Endothelial cell of umbilical vein (primary cell): ENCODE measurements at regions of chr12 and their contacts with region 1.

Region 1: GRCh38 chr12:1474041-1474573 is 120.3 kb downstream of the FBXL14 start:
- DNase-seq: peak; percentile 87
- H3K4me3 ChIP-seq: peak overlapping the region in 1 of 3 experiments; percentile 33
- H3K27ac ChIP-seq: peak overlapping the region; percentile 53
- H3K4me1 ChIP-seq: peaks cover 27% of the 10 kb centered on the region
- H3K27me3 ChIP-seq: peaks cover 9 to 32% of the 10 kb centered on the region in 2 experiments
- CTCF ChIP-seq: no peak
- POLR2A ChIP-seq: peak; percentile 52

Region 2: GRCh38 chr12:1138691-1139090 is 335.4 kb before region 1 on chr12:
- CTCF ChIA-PET with region 1: no interaction called
- POLR2A ChIA-PET with region 1: no interaction called
- dilution Hi-C with region 1: no loop called
- intact Hi-C with region 1: no loop called
- DNase-seq: no peak
- H3K4me3 ChIP-seq: no peak overlapping the region
- H3K27ac ChIP-seq: no peak overlapping the region
- H3K4me1 ChIP-seq: no peaks in the 10 kb centered on the region
- H3K27me3 ChIP-seq: no peaks in the 10 kb centered on the region
- CTCF ChIP-seq: no peak
- POLR2A ChIP-seq: no peak

Region 3: GRCh38 chr12:1463073-1463905 is 10.8 kb before region 1 on chr12:
- CTCF ChIA-PET with region 1: interaction called, 5 read pairs
- POLR2A ChIA-PET with region 1: interaction called, 10 read pairs
- dilution Hi-C with region 1: no loop called
- intact Hi-C with region 1: loop called (anchors 1 kb)
- DNase-seq: no peak
- H3K4me3 ChIP-seq: no peak overlapping the region
- H3K27ac ChIP-seq: no peak overlapping the region
- H3K4me1 ChIP-seq: peaks cover 14% of the 10 kb centered on the region
- H3K27me3 ChIP-seq: peaks cover 0 to 5% of the 10 kb centered on the region in 2 experiments
- CTCF ChIP-seq: no peak
- POLR2A ChIP-seq: no peak

Region 4: GRCh38 chr12:1533602-1534304 is 59.6 kb after region 1 on chr12:
- CTCF ChIA-PET with region 1: interaction called, 4 read pairs
- POLR2A ChIA-PET with region 1: interaction called, 3 read pairs
- dilution Hi-C with region 1: no loop called
- intact Hi-C with region 1: loop called (anchors 1 kb)
- DNase-seq: no peak
- H3K4me3 ChIP-seq: no peak overlapping the region
- H3K27ac ChIP-seq: no peak overlapping the region
- H3K4me1 ChIP-seq: no peaks in the 10 kb centered on the region
- H3K27me3 ChIP-seq: peaks cover 52 to 68% of the 10 kb centered on the region in 2 experiments
- CTCF ChIP-seq: no peak
- POLR2A ChIP-seq: no peak